Activated T-helper 1 cell treated with anti-CD3 and anti-CD28 coated beads, Interleukin-12 subunit alpha, Interleukin-12 subunit beta, Interleukin-2, Interleukin-4 antibody, amounts not matched to agents 30 ng/mL and 10 ng/mL and 1 ng/mL, durations not matched to agents 14 hours and 24 hours and 36 hours (primary cell): ENCODE measurements at regions of chr14 and their contacts with region 1.

Region 1: DNA sequence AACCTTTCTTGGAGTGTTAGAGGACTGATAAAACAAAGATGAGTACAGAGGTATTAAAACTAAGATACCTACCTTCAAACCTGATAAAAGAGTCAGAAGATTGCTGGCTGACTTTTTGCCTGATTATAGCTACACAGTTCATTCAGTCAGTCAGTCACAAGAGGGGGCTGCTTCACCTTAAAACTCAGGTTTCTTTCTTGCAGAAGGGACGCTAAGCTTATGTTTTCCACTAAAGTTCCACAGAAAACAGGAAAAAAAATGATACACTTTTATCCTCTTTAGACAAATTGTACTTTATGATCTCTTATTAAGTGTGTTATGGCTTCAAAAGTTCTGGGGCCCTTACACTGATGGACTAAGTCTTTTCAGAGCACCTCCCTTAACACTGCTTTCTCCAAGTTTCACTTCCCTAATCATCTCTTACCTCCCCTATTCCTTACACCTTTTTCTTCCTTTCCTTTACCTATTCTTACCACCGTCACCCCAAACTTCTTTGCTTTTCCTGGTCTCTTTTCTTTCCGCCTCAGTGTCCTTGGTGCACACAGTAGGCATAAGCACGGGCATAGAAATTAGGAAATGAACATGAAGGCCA is 448.7 kb upstream of the OR4E1 start:
- DNase-seq: no peak
- H3K4me3 Mint-ChIP-seq: peak overlapping the region; percentile 90
- H3K27ac Mint-ChIP-seq: peak overlapping the region; percentile 79
- H3K4me1 Mint-ChIP-seq: peaks cover 21% of the 10 kb centered on the region
- H3K27me3 Mint-ChIP-seq: no peaks in the 10 kb centered on the region

Region 2: DNA sequence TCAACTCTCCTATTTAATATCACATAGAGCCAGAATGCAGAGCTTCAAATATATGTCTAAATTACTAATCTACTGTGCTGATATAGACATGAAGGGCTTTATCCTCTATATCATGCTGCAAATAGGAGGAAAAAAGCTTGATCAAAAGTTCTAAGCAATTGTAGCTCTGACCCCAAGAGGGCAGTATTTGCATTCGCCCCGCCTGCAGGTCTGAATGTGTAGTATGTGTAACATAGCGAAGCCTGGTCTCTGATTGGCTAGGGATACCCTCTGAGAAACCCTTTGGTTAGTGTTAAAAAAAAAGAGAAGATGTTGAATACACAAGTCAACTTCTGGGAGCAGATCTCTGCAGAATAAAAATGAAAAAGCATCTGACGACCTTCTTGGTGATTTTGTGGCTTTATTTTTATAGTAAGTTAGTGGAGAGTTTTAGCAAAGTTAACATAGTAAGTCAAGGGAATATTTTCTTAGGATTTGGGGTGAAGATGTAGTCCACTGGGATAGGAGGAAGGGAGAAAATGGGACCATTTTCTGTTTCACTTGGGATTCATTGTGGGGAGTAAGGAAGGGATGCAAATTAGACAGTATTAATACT is 297.1 kb before region 1 on chr14:
- intact Hi-C with region 1: no loop called
- DNase-seq: peak; percentile 14
- H3K4me3 Mint-ChIP-seq: peak overlapping the region; percentile 61
- H3K27ac Mint-ChIP-seq: peak overlapping the region; percentile 76
- H3K4me1 Mint-ChIP-seq: peaks cover 12% of the 10 kb centered on the region
- H3K27me3 Mint-ChIP-seq: peaks cover 14% of the 10 kb centered on the region

Region 3: GRCh38 chr14:22163051-22163450 is 40.7 kb after region 1 on chr14:
- intact Hi-C with region 1: loop called (anchors 5 kb)
- DNase-seq: no peak
- H3K4me3 Mint-ChIP-seq: peak overlapping the region; percentile 84
- H3K27ac Mint-ChIP-seq: peak overlapping the region; percentile 76
- H3K4me1 Mint-ChIP-seq: peaks cover 18% of the 10 kb centered on the region
- H3K27me3 Mint-ChIP-seq: no peaks in the 10 kb centered on the region

Region 4: GRCh38 chr14:22200977-22201605 is 78.8 kb after region 1 on chr14:
- intact Hi-C with region 1: loop called (anchors 2 kb)
- DNase-seq: no peak
- H3K4me3 Mint-ChIP-seq: no peak overlapping the region
- H3K27ac Mint-ChIP-seq: peak overlapping the region; percentile 44
- H3K4me1 Mint-ChIP-seq: peaks cover 6% of the 10 kb centered on the region
- H3K27me3 Mint-ChIP-seq: no peaks in the 10 kb centered on the region

Region 5: DNA sequence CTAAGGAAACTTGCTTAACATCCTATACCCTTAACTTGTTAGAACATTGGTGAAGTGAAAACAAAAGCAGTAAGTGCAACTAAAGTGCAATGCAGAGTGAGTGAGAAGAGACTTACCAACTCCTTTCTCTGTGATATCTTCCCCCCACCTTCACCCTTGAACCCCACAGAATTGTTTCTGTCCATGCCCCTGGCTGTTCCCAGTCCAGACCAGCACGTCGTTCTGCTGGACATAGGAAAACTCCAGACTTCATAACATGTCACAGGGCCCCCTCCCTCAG is 374.8 kb after region 1 on chr14:
- intact Hi-C with region 1: no loop called
- DNase-seq: no peak
- H3K4me3 Mint-ChIP-seq: peak overlapping the region; percentile 91
- H3K27ac Mint-ChIP-seq: peak overlapping the region; percentile 99
- H3K4me1 Mint-ChIP-seq: peaks cover 58% of the 10 kb centered on the region
- H3K27me3 Mint-ChIP-seq: no peaks in the 10 kb centered on the region